Psoas muscle (tissue), 8 donors: ENCODE measurements at regions of chr19 and their contacts with region 1.

Region 1: DNA sequence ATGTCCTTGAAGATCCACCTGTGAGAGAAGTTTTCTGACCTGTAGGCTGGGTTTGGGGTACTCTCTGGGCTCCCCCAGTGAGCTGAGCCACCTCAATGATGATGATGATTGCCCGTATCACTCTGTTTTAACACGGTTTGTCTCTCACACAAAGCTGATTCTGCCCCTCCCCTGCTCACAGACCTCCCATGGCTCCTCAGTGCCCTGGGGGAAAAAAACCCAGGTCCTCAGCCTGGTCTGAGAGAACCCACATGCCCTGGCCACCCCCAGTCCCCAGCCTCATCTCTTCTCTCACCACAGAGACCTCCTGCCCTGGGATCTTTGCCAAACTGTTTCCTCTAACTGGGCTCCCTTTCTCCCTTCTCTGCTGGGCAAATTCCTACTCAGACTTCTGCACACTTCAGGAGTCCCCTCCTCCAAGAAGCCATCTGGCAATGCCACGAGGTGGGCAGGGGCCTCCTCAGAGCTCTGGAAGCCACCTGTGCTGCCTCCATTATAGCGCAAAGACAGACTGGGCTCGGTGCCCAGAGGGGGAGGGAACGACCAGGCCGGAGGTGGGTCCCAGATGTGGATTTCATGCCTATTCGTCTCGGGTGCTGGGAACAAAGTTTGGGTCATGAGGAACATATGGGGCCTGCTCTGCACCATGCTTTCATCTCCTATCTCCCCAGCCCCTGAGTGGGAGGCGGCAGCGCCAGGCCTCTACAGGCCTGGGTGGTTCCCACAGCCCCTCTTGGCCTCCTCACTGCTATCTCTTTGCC is 8.5 kb upstream of the CA11 start:
- DNase-seq: no peak
- ATAC-seq: no peak
- H3K4me3 ChIP-seq: no peak overlapping the region
- H3K27ac ChIP-seq: no peak overlapping the region
- H3K4me1 ChIP-seq: no peaks in the 10 kb centered on the region
- H3K27me3 ChIP-seq: no peaks in the 10 kb centered on the region
- CTCF ChIP-seq: no peak

Region 2: GRCh38 chr19:48480183-48480557 is 174.3 kb before region 1 on chr19:
- intact Hi-C with region 1: no loop called
- DNase-seq: peak; percentile 69 to 86
- ATAC-seq: peak; percentile 73 to 91 (median 78)
- H3K4me3 ChIP-seq: peak overlapping the region; percentile 77
- H3K27ac ChIP-seq: peak overlapping the region; percentile 86
- H3K4me1 ChIP-seq: peaks cover 19% of the 10 kb centered on the region
- H3K27me3 ChIP-seq: no peaks in the 10 kb centered on the region
- CTCF ChIP-seq: no peak

Region 3: DNA sequence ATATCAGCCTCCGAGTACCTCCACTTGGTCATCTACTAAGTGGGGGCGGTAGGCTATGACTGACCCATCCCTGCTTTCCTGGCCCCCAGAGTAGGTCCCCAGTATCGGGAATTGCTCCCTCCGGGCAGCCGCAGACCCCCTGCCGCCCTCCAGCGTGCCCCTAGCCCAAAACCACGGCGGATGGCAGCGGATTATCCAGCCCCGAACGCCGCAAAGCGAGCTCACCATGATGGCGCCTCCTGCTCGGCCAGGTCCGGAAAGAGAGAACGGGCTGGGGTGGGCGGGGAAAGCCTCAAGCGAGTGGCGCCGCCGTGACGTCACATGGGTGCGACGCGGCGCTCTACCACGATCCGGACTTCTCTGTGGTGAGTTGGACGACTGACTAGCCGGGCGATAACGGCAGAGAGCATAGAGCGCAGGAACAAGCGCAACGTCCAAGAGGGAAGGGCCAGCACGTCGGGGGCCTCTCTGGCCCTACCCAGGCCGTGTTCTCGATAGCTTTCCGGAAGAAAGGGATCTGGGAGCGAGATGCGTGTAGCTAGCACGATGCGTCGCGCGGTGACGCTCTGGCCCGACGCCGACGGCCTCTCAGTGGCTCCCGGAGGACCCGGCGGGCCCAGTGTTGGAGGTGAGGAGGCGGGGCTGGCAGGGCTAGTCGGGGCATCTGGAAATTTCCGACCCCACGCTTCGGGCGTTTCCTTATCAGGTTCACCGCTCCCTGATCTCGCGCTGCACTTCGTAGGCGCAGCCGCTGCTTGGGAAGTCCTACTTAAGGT is 35.4 kb before region 1 on chr19 and contains the starts of genes RPL18 and SPHK2:
- intact Hi-C with region 1: no loop called
- DNase-seq: peak; percentile 98 to 99
- ATAC-seq: peak; percentile 88 to 90 (median 90)
- H3K4me3 ChIP-seq: peak within 1 kb of the TSS; percentile 99
- H3K27ac ChIP-seq: peak within 1 kb of the TSS; percentile 94
- H3K4me1 ChIP-seq: peaks cover 35% of the 10 kb centered on the region
- H3K27me3 ChIP-seq: no peaks in the 10 kb centered on the region
- CTCF ChIP-seq: no peak
- total RNA-seq, gene RPL18: 506 to 730 (median 645) TPM
- total RNA-seq, gene SPHK2: 4.1 to 12.8 (median 8.8) TPM

Region 4: GRCh38 chr19:48705431-48705830 is 51.0 kb after region 1 on chr19:
- intact Hi-C with region 1: loop called in 1 of 2 experiments (anchors 5 kb)
- DNase-seq: no peak
- ATAC-seq: no peak
- H3K4me3 ChIP-seq: no peak overlapping the region
- H3K27ac ChIP-seq: no peak overlapping the region
- H3K4me1 ChIP-seq: no peaks in the 10 kb centered on the region
- H3K27me3 ChIP-seq: no peaks in the 10 kb centered on the region
- CTCF ChIP-seq: no peak